ENCODE measurements at regions of chr5 and their contacts with region 1.

Region 1: DNA sequence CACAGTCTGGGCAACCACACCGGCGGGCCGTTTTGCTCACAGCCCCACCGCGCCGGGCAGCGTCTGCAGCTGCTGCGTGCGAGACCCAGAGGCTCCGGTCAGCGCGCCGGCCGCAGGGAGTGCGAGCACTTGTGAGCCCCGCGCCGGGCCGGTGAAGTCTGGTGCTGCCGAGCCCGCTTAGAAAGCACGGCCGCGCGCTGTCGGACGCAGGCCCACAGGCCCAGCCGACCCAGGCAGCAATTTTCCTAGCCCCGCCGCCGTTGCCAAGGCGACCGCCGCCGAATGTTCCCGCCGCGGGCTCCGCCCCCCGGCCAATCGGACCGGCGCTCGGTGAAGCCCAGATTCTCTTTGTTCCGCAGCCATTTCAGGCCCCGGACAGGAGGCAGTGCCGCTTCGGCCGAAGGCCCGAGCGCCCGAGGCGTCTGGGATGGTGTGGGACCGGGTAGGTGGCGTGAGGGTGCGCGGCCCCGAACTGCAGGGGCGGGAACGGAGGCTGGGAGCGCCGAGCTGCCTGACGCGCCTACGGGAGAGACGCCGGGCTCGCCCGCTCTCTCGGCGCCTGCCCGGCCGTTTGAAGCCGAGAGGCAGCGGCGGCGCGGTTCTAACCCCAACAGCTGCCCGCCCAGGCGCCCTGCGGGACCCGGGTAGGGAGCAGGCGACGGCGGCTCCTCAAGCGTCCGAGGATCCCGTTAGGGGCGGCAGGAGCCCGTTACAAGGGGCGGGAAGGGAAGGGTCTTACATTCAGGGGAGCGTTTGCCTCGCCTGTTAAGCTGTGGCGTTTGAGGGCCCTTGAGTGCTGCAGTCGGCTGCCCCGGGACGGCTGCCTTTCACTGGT is at the start of gene TNPO1:
- DNase-seq: peak; percentile 86 to 90 (median 87)
- H3K4me3 ChIP-seq: peak within 1 kb of the TSS; percentile 69 to 74
- H3K4me3 Mint-ChIP-seq: peak within 1 kb of the TSS; percentile 91 to 98 (median 94)
- H3K27ac ChIP-seq: peak within 1 kb of the TSS; percentile 86
- H3K27ac Mint-ChIP-seq: peak within 1 kb of the TSS; percentile 95 to 98 (median 96)
- H3K4me1 ChIP-seq: peaks cover 26% of the 10 kb centered on the region
- H3K4me1 Mint-ChIP-seq: peaks cover 11 to 31% (median 15%) of the 10 kb centered on the region in 4 donors
- H3K27me3 ChIP-seq: no peaks in the 10 kb centered on the region
- H3K27me3 Mint-ChIP-seq: peaks cover 5 to 8% of the 10 kb centered on the region in 2 donors
- total RNA-seq, gene TNPO1: 86.2 to 86.4 TPM

Region 2: GRCh38 chr5:72319976-72320752 is 496.4 kb before region 1 on chr5 and contains the starts of genes MRPS27 and PTCD2:
- CTCF ChIA-PET with region 1: no interaction called
- POLR2A ChIA-PET with region 1: no interaction called
- intact Hi-C with region 1: loop called (anchors 5 kb)
- DNase-seq: peak; percentile 92 to 97 (median 96)
- H3K4me3 ChIP-seq: peak within 1 kb of the TSS; percentile 100
- H3K4me3 Mint-ChIP-seq: peak within 1 kb of the TSS; percentile 96 to 99 (median 98)
- H3K27ac ChIP-seq: peak within 1 kb of the TSS; percentile 65
- H3K27ac Mint-ChIP-seq: peak within 1 kb of the TSS; percentile 87 to 97 (median 96)
- H3K4me1 ChIP-seq: peaks cover 9% of the 10 kb centered on the region
- H3K4me1 Mint-ChIP-seq: peaks cover 19 to 49% (median 25%) of the 10 kb centered on the region in 4 donors
- H3K27me3 ChIP-seq: no peaks in the 10 kb centered on the region
- H3K27me3 Mint-ChIP-seq: no peaks in the 10 kb centered on the region
- total RNA-seq, gene MRPS27: 36.6 to 44.6 TPM
- total RNA-seq, gene PTCD2: 11.6 to 12.0 TPM

Region 3: GRCh38 chr5:72829707-72830106 is 13.2 kb after region 1 on chr5:
- CTCF ChIA-PET with region 1: interaction called, 27 read pairs
- POLR2A ChIA-PET with region 1: interaction called, 6 read pairs
- intact Hi-C with region 1: no loop called
- DNase-seq: no peak
- H3K4me3 ChIP-seq: no peak overlapping the region
- H3K4me3 Mint-ChIP-seq: no peak overlapping the region
- H3K27ac ChIP-seq: no peak overlapping the region
- H3K27ac Mint-ChIP-seq: no peak overlapping the region
- H3K4me1 ChIP-seq: no peaks in the 10 kb centered on the region
- H3K4me1 Mint-ChIP-seq: peaks cover 0 to 2% (median 0%) of the 10 kb centered on the region in 4 donors
- H3K27me3 ChIP-seq: no peaks in the 10 kb centered on the region
- H3K27me3 Mint-ChIP-seq: no peaks in the 10 kb centered on the region

Region 4: GRCh38 chr5:72842816-72843215 is 26.3 kb after region 1 on chr5:
- CTCF ChIA-PET with region 1: interaction called, 14 read pairs
- POLR2A ChIA-PET with region 1: interaction called, 54 read pairs
- intact Hi-C with region 1: loop called (anchors 1 kb)
- DNase-seq: no peak
- H3K4me3 ChIP-seq: no peak overlapping the region
- H3K4me3 Mint-ChIP-seq: no peak overlapping the region
- H3K27ac ChIP-seq: no peak overlapping the region
- H3K27ac Mint-ChIP-seq: peak overlapping the region in 1 of 7 donors; percentile 53
- H3K4me1 ChIP-seq: peaks cover 7% of the 10 kb centered on the region
- H3K4me1 Mint-ChIP-seq: peaks cover 8 to 21% (median 15%) of the 10 kb centered on the region in 4 donors
- H3K27me3 ChIP-seq: no peaks in the 10 kb centered on the region
- H3K27me3 Mint-ChIP-seq: peaks cover 0 to 2% of the 10 kb centered on the region in 2 donors

Region 5: GRCh38 chr5:73565139-73565968 is 748.8 kb after region 1 on chr5 and contains the starts of genes ANKRA2 and UTP15:
- CTCF ChIA-PET with region 1: no interaction called
- POLR2A ChIA-PET with region 1: interaction called, 12 read pairs
- intact Hi-C with region 1: no loop called
- DNase-seq: peak; percentile 96 to 98 (median 97)
- H3K4me3 ChIP-seq: peak within 1 kb of the TSS; percentile 45 to 83
- H3K4me3 Mint-ChIP-seq: peak within 1 kb of the TSS; percentile 95 to 100 (median 99)
- H3K27ac ChIP-seq: peak within 1 kb of the TSS; percentile 99
- H3K27ac Mint-ChIP-seq: peak within 1 kb of the TSS; percentile 98 to 100 (median 99)
- H3K4me1 ChIP-seq: peaks cover 35% of the 10 kb centered on the region
- H3K4me1 Mint-ChIP-seq: peaks cover 26 to 53% (median 39%) of the 10 kb centered on the region in 4 donors
- H3K27me3 ChIP-seq: no peaks in the 10 kb centered on the region
- H3K27me3 Mint-ChIP-seq: no peaks in the 10 kb centered on the region
- total RNA-seq, gene ANKRA2: 51.9 to 59.4 TPM
- total RNA-seq, gene UTP15: 22.6 to 22.7 TPM

Region 6: DNA sequence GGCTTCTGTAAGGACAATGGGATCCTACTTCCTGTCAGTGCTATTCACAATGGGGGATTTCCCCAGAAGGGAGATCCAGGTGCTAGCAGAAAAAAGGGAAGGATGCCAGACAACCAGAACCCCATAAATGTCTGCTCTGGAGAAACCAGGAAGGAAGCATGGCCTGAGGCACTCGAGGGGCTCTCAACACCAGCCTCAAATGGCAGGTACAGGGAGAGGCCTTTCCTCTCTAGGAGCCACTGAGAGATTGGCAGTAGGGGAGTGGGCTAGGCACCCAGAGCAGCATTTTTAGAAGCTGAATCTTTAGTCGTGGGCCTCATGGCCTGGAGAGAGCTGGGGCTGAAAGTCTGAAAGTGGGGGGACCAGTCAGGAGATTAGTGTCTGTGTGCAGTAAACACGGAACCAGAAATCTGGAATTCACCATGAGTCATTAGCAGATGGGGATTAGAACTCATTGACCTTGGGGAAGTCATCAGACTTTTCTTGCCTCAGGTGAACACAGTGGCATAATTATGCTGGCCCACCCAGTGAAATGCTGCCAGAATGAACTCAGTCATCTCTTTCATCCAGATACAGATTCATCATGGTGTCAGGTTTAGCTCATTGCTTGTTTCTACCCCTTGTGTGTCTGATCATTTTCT is 837.8 kb after region 1 on chr5:
- CTCF ChIA-PET with region 1: no interaction called
- POLR2A ChIA-PET with region 1: no interaction called
- intact Hi-C with region 1: no loop called
- DNase-seq: no peak
- H3K4me3 ChIP-seq: no peak overlapping the region
- H3K4me3 Mint-ChIP-seq: no peak overlapping the region
- H3K27ac ChIP-seq: no peak overlapping the region
- H3K27ac Mint-ChIP-seq: no peak overlapping the region
- H3K4me1 ChIP-seq: no peaks in the 10 kb centered on the region
- H3K4me1 Mint-ChIP-seq: no peaks in the 10 kb centered on the region
- H3K27me3 ChIP-seq: no peaks in the 10 kb centered on the region
- H3K27me3 Mint-ChIP-seq: peaks cover 1 to 7% of the 10 kb centered on the region in 2 donors

Measured in CD4-positive, alpha-beta memory T cell (primary cell).